Kidney (tissue), 22 donors: ENCODE measurements at regions of chr5 and their contacts with region 1.

Region 1: DNA sequence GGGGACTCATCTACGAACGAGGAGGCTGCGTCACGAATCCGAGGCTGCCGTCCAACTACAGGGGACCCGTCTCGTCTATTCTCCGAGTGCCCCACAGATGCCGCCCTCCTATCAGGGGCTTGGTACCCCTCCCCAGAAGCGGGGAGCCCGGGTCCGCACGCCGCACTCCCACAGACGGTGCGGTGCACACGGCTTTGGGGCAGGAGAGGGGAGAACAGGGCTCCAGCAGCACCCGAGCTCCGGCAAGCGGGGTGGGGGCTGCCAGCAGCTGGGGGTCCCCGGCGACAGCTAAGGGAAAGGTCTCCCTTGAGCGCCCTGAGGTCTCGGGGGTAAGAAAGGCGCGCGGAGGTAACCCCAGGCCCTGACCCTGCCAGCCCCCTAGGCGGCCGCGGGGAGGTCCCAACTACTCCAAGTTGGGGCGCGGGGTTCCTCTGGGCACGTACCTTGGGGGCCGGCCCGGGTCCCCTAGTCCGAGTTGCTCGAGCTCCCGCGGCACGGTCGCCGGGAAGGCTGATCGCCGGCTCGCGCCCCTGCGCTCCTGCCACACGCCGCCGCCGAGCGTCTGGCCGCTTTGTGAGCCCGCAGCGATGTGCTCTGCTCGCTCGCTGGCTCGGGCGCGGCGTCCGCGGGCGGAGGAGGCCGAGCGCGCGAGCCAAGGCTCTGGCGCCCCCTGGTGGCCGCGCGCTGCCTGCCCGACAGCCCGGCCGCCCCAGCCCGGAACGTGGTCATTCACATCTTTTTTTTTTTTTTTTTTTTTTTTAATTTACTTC is at the start of gene SPOCK1:
- DNase-seq: peak; percentile 77 to 90 (median 87)
- H3K4me3 ChIP-seq: peak within 1 kb of the TSS in 2 of 3 donors; percentile 38 to 52
- H3K27ac ChIP-seq: no peak within 1 kb of the TSS
- H3K4me1 ChIP-seq: no peaks in the 10 kb centered on the region
- H3K27me3 ChIP-seq: peaks cover 4% of the 10 kb centered on the region
- CTCF ChIP-seq: peak; percentile 95
- total RNA-seq, gene SPOCK1: 15.7 TPM

Region 2: GRCh38 chr5:137320056-137321045 is 178.6 kb before region 1 on chr5:
- intact Hi-C with region 1: loop called (anchors 5 kb)
- DNase-seq: peak in 4 of 5 donors; percentile 42 to 78 (median 67)
- H3K4me3 ChIP-seq: no peak overlapping the region
- H3K27ac ChIP-seq: no peak overlapping the region
- H3K4me1 ChIP-seq: peaks cover 0 to 2% (median 0%) of the 10 kb centered on the region in 3 donors
- H3K27me3 ChIP-seq: no peaks in the 10 kb centered on the region
- CTCF ChIP-seq: peak; percentile 76

Region 3: DNA sequence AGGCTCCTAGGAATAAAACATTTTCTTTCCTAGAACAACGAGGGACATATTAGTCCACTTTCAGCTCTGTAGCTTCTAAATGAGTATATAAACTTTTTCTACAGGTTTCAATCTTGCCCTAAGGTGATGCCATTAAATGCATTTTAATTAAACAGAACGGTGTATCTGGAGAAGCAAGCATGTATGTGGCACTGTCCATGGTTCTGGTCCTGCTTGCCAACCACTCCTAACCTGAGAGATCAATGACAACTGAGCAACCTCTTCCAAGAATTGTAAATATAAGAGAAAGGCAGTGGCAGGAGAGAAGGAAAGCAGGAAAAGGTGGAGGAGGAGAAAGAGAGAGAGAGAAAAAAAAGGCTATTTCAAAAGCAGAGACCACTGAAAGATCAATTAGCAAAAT is 95.8 kb after region 1 on chr5:
- intact Hi-C with region 1: no loop called
- DNase-seq: peak in 2 of 5 donors; percentile 27 to 46
- H3K4me3 ChIP-seq: no peak overlapping the region
- H3K27ac ChIP-seq: no peak overlapping the region
- H3K4me1 ChIP-seq: no peaks in the 10 kb centered on the region
- H3K27me3 ChIP-seq: no peaks in the 10 kb centered on the region
- CTCF ChIP-seq: no peak

Region 4: DNA sequence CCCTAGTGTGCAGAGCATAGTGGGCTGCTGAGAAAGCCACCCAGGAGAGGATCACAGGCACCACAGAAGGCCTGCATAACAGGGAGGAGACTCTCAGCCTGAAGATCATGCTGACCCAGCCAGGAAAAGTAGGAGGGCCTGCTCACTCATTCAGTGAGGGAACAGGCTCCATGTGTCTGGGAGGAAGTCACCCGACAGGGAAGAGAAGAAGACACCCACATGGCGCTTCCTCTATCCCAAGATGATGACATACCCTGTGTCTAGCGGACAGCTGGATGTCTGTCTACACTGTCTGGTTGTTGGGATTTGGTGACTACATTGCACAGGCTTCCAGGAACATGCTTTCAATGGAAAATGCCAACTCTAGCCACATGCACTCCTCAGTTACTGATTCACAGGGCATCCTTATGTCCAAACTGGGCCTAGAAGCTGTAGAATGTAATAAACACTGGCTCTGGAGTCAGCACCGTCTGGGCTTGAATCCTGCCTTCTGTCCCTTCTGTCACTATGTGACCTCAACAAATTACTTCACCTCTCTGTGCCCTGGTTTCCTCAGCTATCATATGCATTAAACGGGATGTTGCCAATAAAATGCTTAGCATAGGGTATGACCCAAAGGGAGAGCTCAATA is 189.4 kb after region 1 on chr5:
- intact Hi-C with region 1: no loop called
- DNase-seq: peak in 1 of 5 donors; percentile 15
- H3K4me3 ChIP-seq: no peak overlapping the region
- H3K27ac ChIP-seq: peak overlapping the region in 1 of 2 donors; percentile 44
- H3K4me1 ChIP-seq: peaks cover 0 to 1% (median 0%) of the 10 kb centered on the region in 3 donors
- H3K27me3 ChIP-seq: no peaks in the 10 kb centered on the region
- CTCF ChIP-seq: no peak